ENCODE measurements at regions of chr14 and their contacts with region 1.

Region 1: GRCh38 chr14:52299692-52300278 is 14.3 kb upstream of the PTGER2 start:
- DNase-seq: no peak
- ATAC-seq: no peak
- H3K4me3 Mint-ChIP-seq: no peak overlapping the region
- H3K27ac Mint-ChIP-seq: no peak overlapping the region
- H3K4me1 Mint-ChIP-seq: no peaks in the 10 kb centered on the region
- H3K27me3 Mint-ChIP-seq: peaks cover 10% of the 10 kb centered on the region
- CTCF ChIP-seq: no peak

Region 2: DNA sequence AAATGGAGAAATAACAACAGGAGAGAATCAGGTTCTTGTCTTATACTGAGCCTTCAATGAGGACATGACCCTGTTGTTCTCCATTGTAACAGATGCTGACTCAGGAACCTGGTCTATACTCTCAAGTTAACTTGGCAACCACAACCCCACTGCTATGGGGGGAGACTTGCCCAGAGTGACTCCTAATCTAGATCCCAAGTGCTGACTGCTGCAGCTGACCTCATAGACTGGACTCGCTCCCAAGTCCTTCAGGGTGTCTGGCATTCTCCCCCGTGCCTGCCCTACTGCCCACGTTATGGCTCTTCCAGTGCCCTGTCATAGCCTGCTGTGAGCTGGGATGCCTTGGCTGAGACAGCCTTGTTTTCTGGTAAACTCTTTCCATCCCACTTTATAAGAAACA is 268.0 kb before region 1 on chr14:
- CTCF ChIA-PET with region 1: no interaction called
- POLR2A ChIA-PET with region 1: no interaction called
- intact Hi-C with region 1: no loop called
- DNase-seq: no peak
- ATAC-seq: no peak
- H3K4me3 Mint-ChIP-seq: no peak overlapping the region
- H3K27ac Mint-ChIP-seq: no peak overlapping the region
- H3K4me1 Mint-ChIP-seq: no peaks in the 10 kb centered on the region
- H3K27me3 Mint-ChIP-seq: peaks cover 4% of the 10 kb centered on the region
- CTCF ChIP-seq: no peak

Region 3: DNA sequence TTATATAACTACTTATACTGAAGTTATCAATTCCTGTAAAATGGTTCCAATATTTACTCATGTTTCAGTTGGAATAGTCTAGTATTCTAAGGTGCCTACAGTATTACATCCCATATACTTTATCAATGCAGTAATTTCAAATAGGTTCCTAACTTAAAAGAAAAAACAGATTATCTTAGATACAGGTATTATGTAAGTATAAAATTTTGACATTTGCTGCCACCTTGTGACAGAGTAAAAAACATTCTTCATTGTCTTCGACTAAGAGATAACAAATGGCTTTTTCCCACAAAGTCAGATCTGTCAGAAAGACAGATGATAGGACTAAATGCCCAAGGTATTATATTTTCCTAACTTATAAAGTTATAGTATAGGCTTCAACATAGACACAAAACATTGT is 173.8 kb after region 1 on chr14:
- CTCF ChIA-PET with region 1: interaction called, 10 read pairs
- POLR2A ChIA-PET with region 1: no interaction called
- intact Hi-C with region 1: loop called (anchors 1 kb)
- DNase-seq: no peak
- ATAC-seq: no peak
- H3K4me3 Mint-ChIP-seq: no peak overlapping the region
- H3K27ac Mint-ChIP-seq: no peak overlapping the region
- H3K4me1 Mint-ChIP-seq: no peaks in the 10 kb centered on the region
- H3K27me3 Mint-ChIP-seq: no peaks in the 10 kb centered on the region
- CTCF ChIP-seq: no peak

Region 4: GRCh38 chr14:53306267-53306721 is 1006.5 kb after region 1 on chr14:
- CTCF ChIA-PET with region 1: no interaction called
- POLR2A ChIA-PET with region 1: no interaction called
- intact Hi-C with region 1: loop called (anchors 2 kb)
- DNase-seq: no peak
- ATAC-seq: peak; percentile 42
- H3K4me3 Mint-ChIP-seq: peak overlapping the region; percentile 30
- H3K27ac Mint-ChIP-seq: no peak overlapping the region
- H3K4me1 Mint-ChIP-seq: peaks cover 17% of the 10 kb centered on the region
- H3K27me3 Mint-ChIP-seq: peaks cover 11% of the 10 kb centered on the region
- CTCF ChIP-seq: peak; percentile 68

Measured in activated B cell treated with CpG ODN at 0.5 μM for 24 hours (primary cell).